Activated B cell treated with CpG ODN at 0.5 μM for 24 hours (primary cell): ENCODE measurements at regions of chr1 and their contacts with region 1.

Region 1: DNA sequence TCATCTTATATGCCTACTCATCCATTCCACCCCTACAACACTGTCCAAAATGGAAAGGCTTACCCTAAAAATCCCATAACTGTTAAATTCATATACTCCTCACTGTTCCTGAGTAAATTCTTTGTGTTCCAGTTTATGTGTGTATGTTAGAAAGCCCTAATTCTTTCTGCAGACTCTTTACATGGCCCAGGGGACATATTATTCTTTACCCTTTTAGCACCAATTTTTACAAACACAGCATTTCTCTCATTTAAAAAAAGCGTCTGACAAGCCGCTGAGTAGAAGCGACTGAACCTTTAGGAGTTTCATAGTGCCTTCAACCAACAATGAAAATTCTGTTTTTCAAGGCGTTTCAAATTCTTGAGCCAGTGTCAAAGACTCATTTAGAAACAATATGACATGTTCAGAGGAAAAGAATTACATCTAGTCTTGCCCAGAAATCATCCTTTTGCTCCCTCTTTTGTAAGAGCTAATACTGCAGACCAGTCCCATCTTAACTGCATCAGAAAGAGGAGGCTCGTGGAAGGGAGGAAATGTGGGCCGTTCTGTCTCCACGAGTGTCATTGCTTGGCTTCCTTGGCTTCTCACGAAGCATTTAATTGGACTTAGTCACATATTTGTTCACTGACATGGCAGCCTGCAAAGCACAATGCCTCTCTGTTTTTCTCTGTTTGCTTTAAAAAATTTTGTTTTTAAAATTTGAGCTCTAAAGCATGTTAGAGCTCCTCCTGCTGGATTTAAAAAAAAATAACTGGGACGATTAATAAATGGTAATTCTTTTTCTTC is 21.3 kb upstream of the C1orf105 start:
- DNase-seq: no peak
- ATAC-seq: peak; percentile 50
- H3K4me3 Mint-ChIP-seq: peak overlapping the region; percentile 73
- H3K27ac Mint-ChIP-seq: peak overlapping the region; percentile 90
- H3K4me1 Mint-ChIP-seq: peaks cover 62% of the 10 kb centered on the region
- H3K27me3 Mint-ChIP-seq: no peaks in the 10 kb centered on the region
- CTCF ChIP-seq: no peak

Region 2: DNA sequence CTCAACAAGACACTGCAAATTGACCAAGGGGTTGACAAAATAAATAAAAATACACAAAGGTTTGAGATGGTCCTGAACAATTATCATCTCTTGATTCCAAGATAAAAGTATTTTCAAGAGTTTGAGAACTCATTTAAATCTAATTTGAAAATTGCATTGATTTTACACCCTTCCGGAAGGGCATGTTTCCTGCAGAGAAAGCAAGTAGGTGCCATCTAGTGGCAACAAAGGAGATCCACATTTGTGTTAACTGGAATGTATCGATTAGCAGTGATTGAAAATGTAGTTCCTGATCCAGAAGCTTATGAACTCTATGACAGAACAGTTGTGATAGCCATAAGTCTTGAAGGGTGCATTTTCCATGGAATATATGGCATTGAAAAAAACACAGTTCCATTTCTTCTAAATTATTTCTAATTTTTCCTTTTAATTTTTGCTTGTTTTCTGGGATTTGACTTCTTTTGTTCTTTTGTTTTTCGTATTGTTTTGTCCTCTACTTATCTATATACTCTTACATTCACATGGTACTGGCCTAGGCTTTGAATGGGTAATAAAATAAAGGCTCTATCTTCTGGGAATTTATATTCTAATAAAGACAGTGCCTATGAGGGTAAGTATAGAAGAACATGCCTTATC is 414.2 kb before region 1 on chr1:
- CTCF ChIA-PET with region 1: interaction called, 16 read pairs
- POLR2A ChIA-PET with region 1: no interaction called
- intact Hi-C with region 1: no loop called
- DNase-seq: no peak
- ATAC-seq: no peak
- H3K4me3 Mint-ChIP-seq: no peak overlapping the region
- H3K27ac Mint-ChIP-seq: no peak overlapping the region
- H3K4me1 Mint-ChIP-seq: no peaks in the 10 kb centered on the region
- H3K27me3 Mint-ChIP-seq: no peaks in the 10 kb centered on the region
- CTCF ChIP-seq: peak; percentile 59

Region 3: GRCh38 chr1:172089768-172090510 is 309.2 kb before region 1 on chr1:
- CTCF ChIA-PET with region 1: interaction called, 69 read pairs
- POLR2A ChIA-PET with region 1: interaction called, 3 read pairs
- intact Hi-C with region 1: loop called (anchors 1 kb)
- DNase-seq: peak; percentile 41
- ATAC-seq: peak; percentile 90
- H3K4me3 Mint-ChIP-seq: peak overlapping the region; percentile 36
- H3K27ac Mint-ChIP-seq: peak overlapping the region; percentile 8
- H3K4me1 Mint-ChIP-seq: peaks cover 8% of the 10 kb centered on the region
- H3K27me3 Mint-ChIP-seq: no peaks in the 10 kb centered on the region
- CTCF ChIP-seq: no peak

Region 4: GRCh38 chr1:172343240-172344160 is 55.7 kb before region 1 on chr1:
- CTCF ChIA-PET with region 1: interaction called, 16 read pairs
- POLR2A ChIA-PET with region 1: interaction called, 95 read pairs
- intact Hi-C with region 1: loop called (anchors 1 kb)
- DNase-seq: no peak
- ATAC-seq: peak; percentile 61
- H3K4me3 Mint-ChIP-seq: peak overlapping the region; percentile 66
- H3K27ac Mint-ChIP-seq: peak overlapping the region; percentile 84
- H3K4me1 Mint-ChIP-seq: peaks cover 69% of the 10 kb centered on the region
- H3K27me3 Mint-ChIP-seq: no peaks in the 10 kb centered on the region
- CTCF ChIP-seq: no peak

Region 5: GRCh38 chr1:172380441-172381244 is 18.5 kb before region 1 on chr1:
- CTCF ChIA-PET with region 1: interaction called, 5 read pairs
- POLR2A ChIA-PET with region 1: interaction called, 248 read pairs
- intact Hi-C with region 1: loop called (anchors 1 kb)
- DNase-seq: no peak
- ATAC-seq: peak; percentile 95
- H3K4me3 Mint-ChIP-seq: peak overlapping the region; percentile 67
- H3K27ac Mint-ChIP-seq: peak overlapping the region; percentile 94
- H3K4me1 Mint-ChIP-seq: peaks cover 58% of the 10 kb centered on the region
- H3K27me3 Mint-ChIP-seq: no peaks in the 10 kb centered on the region
- CTCF ChIP-seq: no peak

Region 6: GRCh38 chr1:172443626-172444453 is 44.7 kb after region 1 on chr1 and contains the start of gene PIGC:
- CTCF ChIA-PET with region 1: interaction called, 7 read pairs
- POLR2A ChIA-PET with region 1: interaction called, 4 read pairs
- intact Hi-C with region 1: loop called (anchors 1 kb)
- DNase-seq: peak; percentile 80
- ATAC-seq: peak; percentile 99
- H3K4me3 Mint-ChIP-seq: peak within 1 kb of the TSS; percentile 90
- H3K27ac Mint-ChIP-seq: peak within 1 kb of the TSS; percentile 84
- H3K4me1 Mint-ChIP-seq: peaks cover 36% of the 10 kb centered on the region
- H3K27me3 Mint-ChIP-seq: no peaks in the 10 kb centered on the region
- CTCF ChIP-seq: no peak
- total RNA-seq, gene PIGC: 24.2 TPM in 2 replicates